Activated T-helper 2 cell treated with anti-CD3 and anti-CD28 coated beads, Interferon-gamma antibody, Interleukin-2, Interleukin-4, amounts not matched to agents 10 μg/mL and 5 μg/mL and 100 μg/mL, durations not matched to agents 14 hours and 24 hours and 36 hours (primary cell): ENCODE measurements at regions of chr6 and their contacts with region 1.

Region 1: DNA sequence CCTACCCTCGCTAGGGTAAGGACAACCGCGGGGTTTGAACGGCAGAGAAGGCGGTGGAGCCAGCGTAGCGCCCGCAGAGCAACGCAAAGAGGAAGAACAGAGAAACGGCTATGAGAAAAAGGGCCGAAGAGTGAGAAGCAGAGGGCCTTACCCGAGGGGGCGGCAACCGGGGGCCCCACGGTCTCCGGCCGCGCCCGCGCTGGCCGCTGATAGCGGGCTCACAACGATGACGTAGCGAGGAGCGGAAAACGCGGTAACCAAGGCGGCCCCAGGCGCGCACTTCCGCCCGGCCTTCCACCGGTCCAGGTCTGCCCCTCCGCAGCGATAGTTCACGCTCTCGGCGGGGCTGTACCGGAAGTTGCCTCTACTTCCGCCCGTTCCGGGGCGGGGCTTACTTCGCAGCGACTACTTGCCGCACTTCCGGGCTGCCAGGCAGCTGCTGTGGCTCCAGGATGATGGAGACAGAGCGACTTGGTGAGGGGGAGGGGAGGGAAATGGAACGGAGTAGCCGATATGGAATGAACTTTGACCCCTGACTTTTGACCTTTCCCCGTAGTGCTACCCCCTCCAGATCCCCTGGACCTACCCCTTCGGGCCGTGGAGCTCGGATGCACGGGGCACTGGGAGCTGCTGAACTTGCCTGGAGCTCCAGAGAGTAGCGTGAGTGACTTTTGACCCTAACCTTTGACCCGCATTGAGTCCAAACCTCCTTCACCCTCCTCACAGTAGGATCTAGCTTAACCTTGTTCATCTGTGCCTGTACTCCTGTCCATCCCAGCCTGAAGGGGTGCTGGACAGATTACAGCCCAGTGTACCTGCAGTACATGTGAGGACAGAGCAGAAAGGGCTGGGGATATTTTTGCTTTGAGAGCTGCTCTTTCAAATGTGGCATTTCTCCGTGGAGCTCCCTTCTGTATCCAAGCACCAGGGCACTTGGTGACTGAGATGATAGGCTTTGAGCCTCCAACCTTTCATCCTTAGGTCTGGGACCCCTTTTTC is at the starts of genes NELFE and SKIC2:
- DNase-seq: peak; percentile 99
- H3K4me3 Mint-ChIP-seq: peak within 1 kb of the TSS; percentile 93
- H3K27ac Mint-ChIP-seq: peak within 1 kb of the TSS; percentile 98
- H3K4me1 Mint-ChIP-seq: peaks cover 25% of the 10 kb centered on the region
- H3K27me3 Mint-ChIP-seq: no peaks in the 10 kb centered on the region
- total RNA-seq, gene NELFE: 81.2 and 82.0 TPM in 2 replicates
- total RNA-seq, gene SKIC2: 93.7 and 99.5 TPM in 2 replicates

Region 2: DNA sequence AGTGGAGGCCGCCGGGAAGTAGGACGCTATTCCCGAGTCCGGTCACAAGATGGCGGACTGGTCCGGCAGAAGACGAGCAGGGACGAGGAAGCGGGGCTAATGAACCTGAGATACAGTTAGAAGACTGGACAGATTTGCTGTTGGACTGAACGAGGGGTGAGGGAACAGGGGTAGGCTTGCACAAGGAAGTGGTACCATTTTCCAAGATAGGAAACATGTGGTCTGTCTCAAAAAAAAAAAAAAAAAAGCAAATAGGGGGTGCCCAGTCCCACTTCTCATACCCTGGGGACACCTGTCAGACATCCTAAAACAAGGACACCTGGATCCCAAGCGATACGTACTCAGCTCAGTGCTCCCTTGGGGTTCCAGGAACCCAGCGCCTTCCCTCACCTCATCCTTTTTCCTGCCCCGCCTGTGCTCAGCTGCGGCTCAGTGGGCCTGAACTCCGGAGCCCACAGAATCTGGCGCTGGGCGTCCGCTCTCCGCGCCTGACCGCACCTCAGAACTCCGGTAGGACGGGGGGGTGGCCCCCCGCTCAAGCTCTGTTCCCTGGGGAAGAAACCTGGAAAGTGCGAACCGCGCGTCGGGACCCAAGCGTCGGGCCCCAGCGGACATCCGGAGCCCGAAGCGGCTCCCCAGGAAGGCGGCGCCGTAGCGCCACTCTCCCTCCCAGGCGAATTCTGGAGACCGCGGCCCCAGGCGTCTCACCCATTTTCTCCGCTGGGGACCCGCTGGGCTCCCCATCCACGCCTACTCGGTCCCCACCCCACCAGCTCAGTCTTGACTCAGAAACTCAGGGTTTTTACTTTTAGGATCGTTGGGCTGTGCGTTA is 278.0 kb before region 1 on chr6 and contains the start of gene LY6G5C:
- intact Hi-C with region 1: loop called (anchors 10 kb)
- DNase-seq: peak; percentile 58
- H3K4me3 Mint-ChIP-seq: peak within 1 kb of the TSS; percentile 73
- H3K27ac Mint-ChIP-seq: peak within 1 kb of the TSS; percentile 64
- H3K4me1 Mint-ChIP-seq: peaks cover 21% of the 10 kb centered on the region
- H3K27me3 Mint-ChIP-seq: no peaks in the 10 kb centered on the region
- total RNA-seq, gene LY6G5C: 4.6 and 4.8 TPM in 2 replicates

Region 3: GRCh38 chr6:31836474-31837368 is 122.3 kb before region 1 on chr6:
- intact Hi-C with region 1: no loop called
- DNase-seq: no peak
- H3K4me3 Mint-ChIP-seq: peak overlapping the region; percentile 87
- H3K27ac Mint-ChIP-seq: peak overlapping the region; percentile 97
- H3K4me1 Mint-ChIP-seq: peaks cover 31% of the 10 kb centered on the region
- H3K27me3 Mint-ChIP-seq: no peaks in the 10 kb centered on the region

Region 4: DNA sequence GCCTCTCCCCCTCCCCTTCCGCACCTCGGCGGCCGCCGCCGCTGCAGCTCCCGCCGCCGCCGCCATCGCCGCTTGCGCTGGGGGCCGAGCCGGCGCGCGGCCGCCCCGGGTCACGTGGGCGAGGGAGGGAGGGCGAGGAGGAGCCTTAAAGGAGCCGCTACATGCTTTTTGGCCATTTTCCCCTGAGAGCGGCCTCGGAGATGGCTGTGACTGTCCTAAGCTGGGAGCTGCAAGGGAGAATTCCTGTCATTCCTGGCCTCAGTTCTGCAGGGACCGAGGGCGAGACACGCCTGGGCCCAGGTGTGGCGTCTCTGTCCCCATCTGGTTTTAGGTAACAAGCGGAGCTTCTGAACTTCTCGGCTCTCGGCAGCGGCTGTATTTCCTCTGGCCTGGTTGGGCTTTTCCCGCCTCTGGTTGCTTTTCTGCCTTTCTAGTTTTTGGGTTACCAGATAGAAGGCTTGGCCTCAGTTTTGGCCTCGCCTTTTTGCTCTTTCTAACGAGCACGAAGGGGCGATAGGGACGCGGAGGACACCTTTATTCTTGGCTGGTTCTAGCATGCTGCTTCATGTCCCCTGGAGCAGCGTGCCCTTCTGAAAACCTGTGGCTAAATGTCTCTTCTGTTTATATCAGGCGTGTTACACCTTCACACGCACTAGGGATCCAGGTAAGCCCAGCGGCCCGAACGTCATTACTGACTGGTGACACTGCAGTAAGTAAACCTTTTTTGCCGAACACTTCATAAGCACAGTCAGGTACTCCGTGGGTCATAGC is 61.2 kb before region 1 on chr6 and contains the start of gene EHMT2:
- intact Hi-C with region 1: loop called (anchors 2 kb)
- DNase-seq: peak; percentile 84
- H3K4me3 Mint-ChIP-seq: peak within 1 kb of the TSS; percentile 98
- H3K27ac Mint-ChIP-seq: peak within 1 kb of the TSS; percentile 92
- H3K4me1 Mint-ChIP-seq: peaks cover 31% of the 10 kb centered on the region
- H3K27me3 Mint-ChIP-seq: no peaks in the 10 kb centered on the region
- total RNA-seq, gene EHMT2: 76.3 and 76.5 TPM in 2 replicates

Region 5: GRCh38 chr6:31971993-31972708 is 13.1 kb after region 1 on chr6 and contains the start of gene DXO:
- intact Hi-C with region 1: loop called (anchors 1 kb)
- DNase-seq: peak; percentile 97
- H3K4me3 Mint-ChIP-seq: peak within 1 kb of the TSS; percentile 94
- H3K27ac Mint-ChIP-seq: peak within 1 kb of the TSS; percentile 99
- H3K4me1 Mint-ChIP-seq: peaks cover 28% of the 10 kb centered on the region
- H3K27me3 Mint-ChIP-seq: no peaks in the 10 kb centered on the region
- total RNA-seq, gene DXO: 15.7 and 16.6 TPM in 2 replicates